ENCODE measurements at regions of chr14 and their contacts with region 1.

Region 1: GRCh38 chr14:70907176-70907995 is at the start of gene PCNX1:
- DNase-seq: peak; percentile 92
- H3K4me3 ChIP-seq: peak within 1 kb of the TSS; percentile 93
- H3K27ac ChIP-seq: peak within 1 kb of the TSS; percentile 87
- H3K4me1 ChIP-seq: peaks cover 56% of the 10 kb centered on the region
- H3K27me3 ChIP-seq: no peaks in the 10 kb centered on the region
- CTCF ChIP-seq: peak; percentile 68
- total RNA-seq, gene PCNX1: 46.8 and 60.7 TPM in 2 replicates

Region 2: DNA sequence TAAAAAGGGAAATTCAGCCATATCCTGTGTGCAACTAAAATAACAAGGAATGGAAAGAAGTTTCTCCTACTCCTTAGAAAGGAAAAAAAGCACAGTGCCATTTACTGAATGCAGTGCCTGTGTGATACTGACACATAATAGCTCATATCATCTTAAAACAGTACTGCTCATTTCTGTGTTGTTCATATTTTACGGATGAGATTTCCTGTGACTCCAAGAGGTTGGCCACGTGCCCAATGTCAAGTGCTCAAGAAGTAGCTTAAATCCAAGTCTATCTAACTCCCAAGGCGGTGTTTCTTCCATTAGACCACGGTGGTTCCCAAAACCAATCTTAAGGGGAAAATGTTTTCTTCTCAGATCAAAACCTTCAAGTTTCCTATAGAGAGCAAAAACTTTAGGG is 118.0 kb before region 1 on chr14:
- CTCF ChIA-PET with region 1: no interaction called
- POLR2A ChIA-PET with region 1: no interaction called
- intact Hi-C with region 1: no loop called
- DNase-seq: peak; percentile 65
- H3K4me3 ChIP-seq: no peak overlapping the region
- H3K27ac ChIP-seq: no peak overlapping the region
- H3K4me1 ChIP-seq: peaks cover 8% of the 10 kb centered on the region
- H3K27me3 ChIP-seq: no peaks in the 10 kb centered on the region
- CTCF ChIP-seq: no peak

Region 3: GRCh38 chr14:70816525-70816924 is 90.9 kb before region 1 on chr14:
- CTCF ChIA-PET with region 1: no interaction called
- POLR2A ChIA-PET with region 1: no interaction called
- intact Hi-C with region 1: loop called (anchors 2 kb)
- DNase-seq: peak; percentile 51
- H3K4me3 ChIP-seq: no peak overlapping the region
- H3K27ac ChIP-seq: no peak overlapping the region
- H3K4me1 ChIP-seq: peaks cover 15% of the 10 kb centered on the region
- H3K27me3 ChIP-seq: no peaks in the 10 kb centered on the region
- CTCF ChIP-seq: no peak

Region 4: GRCh38 chr14:70856851-70857495 is 50.4 kb before region 1 on chr14:
- CTCF ChIA-PET with region 1: no interaction called
- POLR2A ChIA-PET with region 1: no interaction called
- intact Hi-C with region 1: loop called (anchors 2 kb)
- DNase-seq: no peak
- H3K4me3 ChIP-seq: no peak overlapping the region
- H3K27ac ChIP-seq: no peak overlapping the region
- H3K4me1 ChIP-seq: peaks cover 28% of the 10 kb centered on the region
- H3K27me3 ChIP-seq: no peaks in the 10 kb centered on the region
- CTCF ChIP-seq: no peak

Region 5: DNA sequence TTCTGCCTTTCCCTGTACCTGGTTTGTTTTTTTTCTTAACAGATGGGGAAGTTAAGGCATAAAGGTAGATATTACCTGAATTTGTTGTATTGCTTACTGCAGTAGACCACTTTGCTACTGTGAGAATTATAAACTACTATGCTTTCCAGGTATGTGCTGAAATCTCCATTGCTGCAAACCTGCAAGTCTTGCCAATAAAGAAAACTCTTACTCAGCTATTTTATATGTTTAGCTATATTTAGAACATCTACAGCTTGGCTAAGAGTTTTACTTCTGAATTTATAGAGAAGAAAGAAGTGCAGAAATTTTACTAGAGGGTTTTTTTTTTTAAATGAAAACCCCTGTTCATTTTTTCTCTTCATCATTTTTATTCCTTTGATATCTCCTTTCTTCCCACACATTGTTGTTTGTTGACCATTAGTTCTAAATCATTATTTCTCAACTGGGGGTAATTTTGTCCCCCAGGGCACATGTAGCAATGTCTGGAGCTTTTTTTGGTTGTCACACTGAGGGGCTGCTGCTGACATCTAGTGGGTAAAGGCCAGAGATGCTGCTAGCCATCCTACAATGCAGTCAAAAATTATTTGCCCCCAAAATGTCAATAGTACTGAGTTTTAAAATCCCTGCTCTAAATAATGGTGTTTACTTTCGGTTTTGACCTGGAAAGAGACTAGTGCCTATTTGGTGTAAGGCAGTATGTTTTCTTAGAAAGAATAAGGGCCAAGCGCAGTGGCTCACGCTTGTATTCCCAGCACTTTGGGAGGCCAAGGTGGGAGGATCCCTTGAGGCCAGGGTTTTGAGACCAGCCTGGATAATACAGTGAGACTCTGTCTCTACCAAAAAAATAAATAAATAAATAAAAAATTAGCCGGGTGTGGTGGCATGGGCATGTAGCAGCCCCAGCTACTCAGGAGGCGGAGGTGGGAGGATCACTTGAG is 48.4 kb after region 1 on chr14:
- CTCF ChIA-PET with region 1: interaction called, 14 read pairs
- POLR2A ChIA-PET with region 1: interaction called, 3 read pairs
- intact Hi-C with region 1: loop called (anchors 2 kb)
- DNase-seq: peak; percentile 60
- H3K4me3 ChIP-seq: no peak overlapping the region
- H3K27ac ChIP-seq: no peak overlapping the region
- H3K4me1 ChIP-seq: peaks cover 14% of the 10 kb centered on the region
- H3K27me3 ChIP-seq: no peaks in the 10 kb centered on the region
- CTCF ChIP-seq: peak; percentile 74

Region 6: GRCh38 chr14:70972107-70972976 is 65.0 kb after region 1 on chr14:
- CTCF ChIA-PET with region 1: interaction called, 6 read pairs
- POLR2A ChIA-PET with region 1: no interaction called
- intact Hi-C with region 1: loop called (anchors 5 kb)
- DNase-seq: peak; percentile 91
- H3K4me3 ChIP-seq: no peak overlapping the region
- H3K27ac ChIP-seq: no peak overlapping the region
- H3K4me1 ChIP-seq: peaks cover 6% of the 10 kb centered on the region
- H3K27me3 ChIP-seq: no peaks in the 10 kb centered on the region
- CTCF ChIP-seq: peak; percentile 90